Endothelial cell of umbilical vein (primary cell): ENCODE measurements at regions of chr3 and their contacts with region 1.

Region 1: DNA sequence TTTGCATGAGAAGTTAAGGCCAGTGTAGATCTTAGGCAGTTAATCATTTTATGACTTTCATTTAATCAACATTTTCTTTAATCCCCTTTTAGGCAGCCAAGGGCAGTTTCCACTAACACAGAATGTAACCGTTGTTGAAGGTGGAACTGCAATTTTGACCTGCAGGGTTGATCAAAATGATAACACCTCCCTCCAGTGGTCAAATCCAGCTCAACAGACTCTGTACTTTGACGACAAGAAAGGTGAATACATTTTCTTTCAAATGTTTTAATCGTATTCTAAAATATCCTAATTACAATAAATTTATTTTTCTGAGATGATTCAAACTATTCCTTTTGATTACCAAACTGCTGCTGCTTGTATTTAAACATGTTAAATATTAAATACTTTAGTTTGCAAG is 843.2 kb downstream of the CADM2 start:
- DNase-seq: peak; percentile 4
- H3K4me3 ChIP-seq: no peak overlapping the region
- H3K27ac ChIP-seq: no peak overlapping the region
- H3K4me1 ChIP-seq: no peaks in the 10 kb centered on the region
- H3K27me3 ChIP-seq: no peaks in the 10 kb centered on the region
- CTCF ChIP-seq: no peak
- POLR2A ChIP-seq: no peak

Region 2: DNA sequence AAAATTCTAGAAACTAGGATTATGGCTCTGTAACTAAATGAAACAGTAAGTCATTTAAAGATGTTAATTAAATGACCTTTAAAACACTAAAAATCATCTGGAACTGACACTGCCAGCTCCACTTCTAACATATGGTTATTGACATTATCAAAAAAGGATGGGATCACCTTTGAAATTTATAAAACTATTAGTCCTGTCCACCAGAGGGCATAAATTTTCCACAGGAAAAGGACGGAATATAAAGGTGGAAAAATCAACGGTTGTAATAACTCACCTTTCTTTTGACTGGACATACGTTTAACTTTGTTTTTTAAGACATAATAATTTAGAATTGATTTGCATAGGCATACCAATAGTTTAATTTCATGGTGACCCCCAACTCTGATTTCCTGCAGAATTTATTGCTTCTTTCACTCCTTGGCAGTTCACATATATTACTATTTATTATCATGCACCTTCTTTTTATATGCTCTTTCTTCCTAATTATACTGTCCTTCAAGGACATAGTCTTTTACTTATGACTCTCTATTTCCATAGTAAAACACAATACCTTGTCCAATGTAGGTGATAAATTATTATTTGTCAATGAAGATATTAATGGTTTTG is 497.5 kb before region 1 on chr3:
- CTCF ChIA-PET with region 1: no interaction called
- POLR2A ChIA-PET with region 1: no interaction called
- dilution Hi-C with region 1: no loop called
- intact Hi-C with region 1: loop called (anchors 5 kb)
- DNase-seq: no peak
- H3K4me3 ChIP-seq: no peak overlapping the region
- H3K27ac ChIP-seq: no peak overlapping the region
- H3K4me1 ChIP-seq: no peaks in the 10 kb centered on the region
- H3K27me3 ChIP-seq: no peaks in the 10 kb centered on the region
- CTCF ChIP-seq: no peak
- POLR2A ChIP-seq: no peak

Region 3: DNA sequence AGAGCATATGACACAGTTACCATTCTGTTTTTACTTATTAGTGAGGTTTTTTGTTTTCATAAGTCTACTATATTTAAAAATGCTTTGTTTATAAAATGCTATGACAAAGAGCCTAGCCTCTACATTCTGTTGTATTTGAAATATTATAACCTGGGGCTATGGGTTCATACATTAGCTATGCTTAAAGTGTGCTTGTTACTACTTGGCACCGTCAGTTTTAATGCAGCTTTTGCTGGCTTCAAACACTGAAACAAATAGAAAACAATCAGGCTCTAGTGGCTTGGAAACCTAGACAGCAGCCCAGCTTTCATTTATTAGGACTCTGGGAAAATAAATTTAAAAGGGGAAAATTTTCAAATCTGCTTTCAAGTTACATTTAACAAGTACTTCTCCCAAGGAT is 207.3 kb before region 1 on chr3:
- CTCF ChIA-PET with region 1: no interaction called
- POLR2A ChIA-PET with region 1: no interaction called
- dilution Hi-C with region 1: no loop called
- intact Hi-C with region 1: loop called (anchors 10 kb)
- DNase-seq: no peak
- H3K4me3 ChIP-seq: no peak overlapping the region
- H3K27ac ChIP-seq: no peak overlapping the region
- H3K4me1 ChIP-seq: no peaks in the 10 kb centered on the region
- H3K27me3 ChIP-seq: no peaks in the 10 kb centered on the region
- CTCF ChIP-seq: no peak
- POLR2A ChIP-seq: no peak

Region 4: DNA sequence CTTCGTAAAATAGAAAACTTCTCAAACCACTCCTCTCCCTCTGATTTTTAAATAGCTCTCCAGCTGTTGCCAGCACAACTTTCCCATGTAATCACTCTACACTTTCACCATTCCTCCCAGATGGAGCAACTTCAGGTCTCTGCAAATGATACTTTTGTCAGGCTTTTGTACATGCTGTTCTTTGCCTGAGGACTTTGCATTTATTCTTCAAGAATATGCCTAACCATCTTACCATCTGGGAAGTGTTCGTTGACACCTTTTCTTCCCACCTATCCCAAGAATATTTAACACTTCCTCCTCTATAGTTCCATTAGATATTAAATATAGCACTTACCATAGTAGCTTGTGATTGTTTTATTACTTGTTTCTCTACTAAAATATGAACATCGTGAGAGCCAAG is 139.5 kb before region 1 on chr3:
- CTCF ChIA-PET with region 1: no interaction called
- POLR2A ChIA-PET with region 1: no interaction called
- dilution Hi-C with region 1: no loop called
- intact Hi-C with region 1: loop called (anchors 10 kb)
- DNase-seq: no peak
- H3K4me3 ChIP-seq: no peak overlapping the region
- H3K27ac ChIP-seq: no peak overlapping the region
- H3K4me1 ChIP-seq: no peaks in the 10 kb centered on the region
- H3K27me3 ChIP-seq: no peaks in the 10 kb centered on the region
- CTCF ChIP-seq: no peak
- POLR2A ChIP-seq: no peak

Region 5: DNA sequence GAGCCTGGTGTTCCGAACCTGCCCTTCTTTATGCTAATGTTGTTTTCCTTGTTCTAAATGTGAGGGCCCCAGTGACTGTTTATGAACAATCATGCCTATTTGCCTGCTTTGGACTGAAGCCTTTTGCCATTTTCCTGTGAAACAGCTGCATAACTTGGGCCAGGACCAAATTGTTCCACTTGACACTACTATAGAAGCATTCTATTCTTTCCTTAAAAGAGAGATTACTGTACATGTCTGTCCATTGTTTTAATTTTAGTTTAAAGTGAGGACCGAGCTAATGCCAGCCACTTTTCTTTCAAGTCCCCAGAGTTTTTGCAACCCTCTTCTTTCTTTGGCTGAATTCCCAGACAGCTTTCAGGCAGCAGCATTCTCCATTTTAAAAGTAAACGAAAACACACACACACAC is 137.1 kb after region 1 on chr3:
- CTCF ChIA-PET with region 1: no interaction called
- POLR2A ChIA-PET with region 1: no interaction called
- dilution Hi-C with region 1: no loop called
- intact Hi-C with region 1: no loop called
- DNase-seq: no peak
- H3K4me3 ChIP-seq: no peak overlapping the region
- H3K27ac ChIP-seq: no peak overlapping the region
- H3K4me1 ChIP-seq: no peaks in the 10 kb centered on the region
- H3K27me3 ChIP-seq: no peaks in the 10 kb centered on the region
- CTCF ChIP-seq: no peak
- POLR2A ChIP-seq: no peak